ENCODE measurements at regions of chr16 and their contacts with region 1.

Region 1: DNA sequence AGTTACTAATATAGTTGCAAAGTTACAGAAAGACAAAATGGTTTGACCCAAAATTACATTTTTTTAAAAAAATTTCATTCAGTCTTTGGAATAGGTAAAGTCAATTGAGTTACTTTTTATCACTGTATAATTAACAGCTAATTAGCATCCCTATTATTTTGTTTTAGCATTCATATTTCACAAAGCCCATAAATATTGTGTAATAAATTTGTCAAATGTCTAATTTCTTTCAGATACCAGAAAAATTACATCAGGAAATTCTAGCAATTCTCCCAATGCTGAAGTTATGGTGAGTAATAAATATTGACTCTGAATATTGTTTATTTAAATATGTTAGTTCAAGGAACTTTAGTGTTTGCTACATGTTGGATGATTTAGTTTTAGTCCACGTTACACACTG is 87.4 kb downstream of the ATF7IP2 start:
- DNase-seq: no peak
- ATAC-seq: no peak
- H3K4me3 Mint-ChIP-seq: no peak overlapping the region
- H3K27ac Mint-ChIP-seq: no peak overlapping the region
- H3K4me1 Mint-ChIP-seq: no peaks in the 10 kb centered on the region
- H3K27me3 Mint-ChIP-seq: no peaks in the 10 kb centered on the region

Region 2: DNA sequence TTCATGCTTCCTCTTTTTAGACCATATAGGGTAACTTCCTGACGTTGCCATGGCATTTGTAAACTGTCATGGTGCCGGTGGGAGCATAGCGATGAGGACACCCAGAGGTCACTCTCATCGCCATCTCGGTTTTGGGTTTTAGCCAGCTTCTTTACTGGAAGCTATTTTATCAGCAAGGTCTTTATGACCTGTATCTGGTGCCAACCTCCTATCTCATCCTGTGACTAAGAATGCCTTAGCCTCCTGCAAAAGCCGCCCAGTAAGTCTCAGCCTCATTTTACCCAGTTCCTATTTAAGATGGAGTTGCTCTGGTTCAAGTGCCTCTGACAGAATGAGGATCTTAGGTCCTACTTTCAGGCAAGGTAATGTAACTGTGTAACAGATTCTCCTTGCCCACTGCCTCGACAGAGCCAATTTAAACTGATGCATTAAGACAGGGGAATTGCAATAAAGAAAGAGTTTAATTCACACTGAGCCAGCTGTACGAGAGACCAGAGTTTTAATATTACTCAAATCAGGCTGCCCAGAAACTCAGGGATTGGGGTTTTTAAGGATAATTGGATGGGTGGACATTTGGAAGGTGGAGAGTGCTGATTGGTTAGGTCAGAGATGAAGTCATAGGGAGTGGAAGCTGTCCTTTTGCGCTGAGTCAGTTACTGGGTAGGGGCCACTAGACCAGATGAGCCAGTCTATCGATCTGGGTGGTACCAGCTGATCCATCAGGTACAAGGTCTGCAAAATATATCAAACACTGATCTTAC is 147.3 kb before region 1 on chr16:
- CTCF ChIA-PET with region 1: no interaction called
- POLR2A ChIA-PET with region 1: no interaction called
- intact Hi-C with region 1: no loop called
- DNase-seq: no peak
- ATAC-seq: no peak
- H3K4me3 Mint-ChIP-seq: no peak overlapping the region
- H3K27ac Mint-ChIP-seq: no peak overlapping the region
- H3K4me1 Mint-ChIP-seq: peaks cover 18% of the 10 kb centered on the region
- H3K27me3 Mint-ChIP-seq: no peaks in the 10 kb centered on the region

Region 3: GRCh38 chr16:10485698-10486382 is 12.6 kb after region 1 on chr16:
- CTCF ChIA-PET with region 1: no interaction called
- POLR2A ChIA-PET with region 1: no interaction called
- intact Hi-C with region 1: loop called in 1 of 2 experiments (anchors 2 kb)
- DNase-seq: no peak
- ATAC-seq: no peak
- H3K4me3 Mint-ChIP-seq: no peak overlapping the region
- H3K27ac Mint-ChIP-seq: no peak overlapping the region
- H3K4me1 Mint-ChIP-seq: no peaks in the 10 kb centered on the region
- H3K27me3 Mint-ChIP-seq: no peaks in the 10 kb centered on the region